Activated naive CD4-positive, alpha-beta T cell treated with anti-CD3 and anti-CD28 coated beads for 36 hours (primary cell): ENCODE measurements at regions of chr6 and their contacts with region 1.

Region 1: DNA sequence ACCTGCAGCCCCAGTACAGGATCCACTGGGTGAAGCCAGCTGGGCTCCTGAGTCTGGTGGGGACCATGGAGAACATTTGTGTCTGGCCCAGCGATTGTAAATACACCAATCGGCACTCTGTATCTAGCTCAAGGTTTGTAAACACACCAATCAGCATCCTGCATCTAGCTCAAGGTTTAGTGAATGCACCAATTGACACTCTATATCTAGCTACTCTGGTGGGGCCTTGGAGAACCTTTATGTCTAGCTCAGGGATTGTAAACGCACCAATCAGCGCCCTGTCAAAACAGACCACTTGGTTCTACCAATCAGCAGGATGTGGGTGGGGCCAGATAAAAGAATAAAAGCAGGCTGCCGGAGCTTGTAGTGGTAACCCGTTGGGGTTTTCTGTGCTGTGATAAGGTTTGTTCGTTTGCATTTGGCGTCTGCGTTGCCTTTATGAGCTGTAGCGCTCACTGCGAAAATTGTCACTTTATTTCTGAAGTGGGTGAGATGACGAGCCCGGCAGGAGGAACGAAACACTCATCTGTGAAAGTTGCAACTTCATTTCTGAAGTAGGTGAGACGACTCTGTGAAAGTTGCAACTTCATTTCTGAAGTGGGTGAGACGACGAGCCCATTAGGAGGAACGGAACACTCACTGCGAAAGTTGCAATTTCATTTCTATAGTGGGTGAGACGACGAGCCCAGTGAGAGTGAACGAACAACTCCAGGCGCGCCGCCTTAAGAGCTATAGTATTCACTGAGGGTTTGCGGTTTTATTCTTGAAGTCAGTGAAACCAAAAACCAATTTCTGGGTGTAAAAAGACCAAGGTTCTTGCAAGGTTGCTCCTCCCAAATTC is 31.1 kb downstream of the SERPINB6 start:
- DNase-seq: peak; percentile 95
- H3K4me3 Mint-ChIP-seq: peak overlapping the region; percentile 2
- H3K27ac Mint-ChIP-seq: peak overlapping the region; percentile 97
- H3K4me1 Mint-ChIP-seq: peaks cover 69% of the 10 kb centered on the region
- H3K27me3 Mint-ChIP-seq: no peaks in the 10 kb centered on the region

Region 2: GRCh38 chr6:1498491-1499113 is 1441.6 kb before region 1 on chr6:
- CTCF ChIA-PET with region 1: no interaction called
- intact Hi-C with region 1: no loop called
- DNase-seq: no peak
- H3K4me3 Mint-ChIP-seq: no peak overlapping the region
- H3K27ac Mint-ChIP-seq: no peak overlapping the region
- H3K4me1 Mint-ChIP-seq: no peaks in the 10 kb centered on the region
- H3K27me3 Mint-ChIP-seq: peaks cover 6% of the 10 kb centered on the region

Region 3: GRCh38 chr6:1596088-1596852 is 1344.0 kb before region 1 on chr6:
- CTCF ChIA-PET with region 1: no interaction called
- intact Hi-C with region 1: no loop called
- DNase-seq: peak; percentile 70
- H3K4me3 Mint-ChIP-seq: no peak overlapping the region
- H3K27ac Mint-ChIP-seq: no peak overlapping the region
- H3K4me1 Mint-ChIP-seq: peaks cover 5% of the 10 kb centered on the region
- H3K27me3 Mint-ChIP-seq: peaks cover 56% of the 10 kb centered on the region

Region 4: GRCh38 chr6:2127484-2127911 is 812.7 kb before region 1 on chr6:
- CTCF ChIA-PET with region 1: no interaction called
- intact Hi-C with region 1: no loop called
- DNase-seq: peak; percentile 67
- H3K4me3 Mint-ChIP-seq: no peak overlapping the region
- H3K27ac Mint-ChIP-seq: peak overlapping the region; percentile 12
- H3K4me1 Mint-ChIP-seq: peaks cover 31% of the 10 kb centered on the region
- H3K27me3 Mint-ChIP-seq: no peaks in the 10 kb centered on the region

Region 5: GRCh38 chr6:2684059-2684749 is 256.0 kb before region 1 on chr6:
- CTCF ChIA-PET with region 1: no interaction called
- intact Hi-C with region 1: no loop called
- DNase-seq: no peak
- H3K4me3 Mint-ChIP-seq: no peak overlapping the region
- H3K27ac Mint-ChIP-seq: no peak overlapping the region
- H3K4me1 Mint-ChIP-seq: no peaks in the 10 kb centered on the region
- H3K27me3 Mint-ChIP-seq: no peaks in the 10 kb centered on the region

Region 6: GRCh38 chr6:2818593-2818992 is 121.6 kb before region 1 on chr6:
- CTCF ChIA-PET with region 1: no interaction called
- intact Hi-C with region 1: loop called (anchors 1 kb)
- DNase-seq: peak; percentile 61
- H3K4me3 Mint-ChIP-seq: no peak overlapping the region
- H3K27ac Mint-ChIP-seq: peak overlapping the region; percentile 17
- H3K4me1 Mint-ChIP-seq: peaks cover 40% of the 10 kb centered on the region
- H3K27me3 Mint-ChIP-seq: no peaks in the 10 kb centered on the region

Region 7: GRCh38 chr6:2853761-2854395 is 86.4 kb before region 1 on chr6:
- CTCF ChIA-PET with region 1: interaction called, 177 read pairs
- intact Hi-C with region 1: loop called (anchors 1 kb)
- DNase-seq: peak; percentile 96
- H3K4me3 Mint-ChIP-seq: peak overlapping the region; percentile 59
- H3K27ac Mint-ChIP-seq: peak overlapping the region; percentile 100
- H3K4me1 Mint-ChIP-seq: peaks cover 64% of the 10 kb centered on the region
- H3K27me3 Mint-ChIP-seq: no peaks in the 10 kb centered on the region

Region 8: DNA sequence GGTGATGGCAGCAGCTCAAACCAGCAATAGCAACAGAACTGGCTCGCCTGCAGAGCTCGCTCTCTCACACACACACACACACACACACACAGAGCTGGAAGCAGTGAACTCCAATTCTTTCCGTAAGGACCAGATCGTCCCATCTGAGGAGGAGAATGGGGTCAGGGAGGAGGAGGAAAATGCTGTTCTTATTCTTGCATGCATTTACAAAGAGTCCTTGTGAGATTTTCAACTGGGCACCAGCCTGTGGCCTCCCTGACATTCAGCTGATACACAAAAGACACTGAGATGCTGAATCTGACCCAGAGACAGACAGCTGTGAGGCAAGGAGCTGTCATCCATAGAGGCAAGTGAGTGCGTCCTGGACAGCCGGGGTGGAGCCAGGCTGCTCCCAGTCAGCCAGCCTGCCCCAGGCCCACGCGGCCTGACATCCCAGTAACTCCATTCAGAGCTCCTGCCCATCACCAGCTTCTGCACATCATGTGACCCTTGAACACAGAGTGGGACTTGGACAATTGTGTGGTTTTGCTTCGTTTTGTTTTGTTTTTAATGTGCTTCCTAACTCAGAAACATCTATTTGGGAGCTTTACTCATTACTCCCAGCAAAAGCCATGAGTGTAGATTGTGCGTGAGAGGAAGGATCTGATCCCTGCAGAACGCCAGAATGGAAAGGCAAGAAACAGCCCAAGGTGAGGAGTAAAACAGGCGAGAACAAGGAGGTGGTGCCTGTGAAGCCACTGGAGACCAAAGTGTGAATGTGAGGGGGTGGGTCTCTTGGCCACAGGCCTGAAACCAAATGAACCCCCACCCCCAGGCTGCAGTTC is 39.2 kb before region 1 on chr6:
- CTCF ChIA-PET with region 1: interaction called, 5 read pairs
- intact Hi-C with region 1: loop called (anchors 1 kb)
- DNase-seq: no peak
- H3K4me3 Mint-ChIP-seq: peak overlapping the region; percentile 99
- H3K27ac Mint-ChIP-seq: peak overlapping the region; percentile 96
- H3K4me1 Mint-ChIP-seq: peaks cover 52% of the 10 kb centered on the region
- H3K27me3 Mint-ChIP-seq: no peaks in the 10 kb centered on the region

Region 9: DNA sequence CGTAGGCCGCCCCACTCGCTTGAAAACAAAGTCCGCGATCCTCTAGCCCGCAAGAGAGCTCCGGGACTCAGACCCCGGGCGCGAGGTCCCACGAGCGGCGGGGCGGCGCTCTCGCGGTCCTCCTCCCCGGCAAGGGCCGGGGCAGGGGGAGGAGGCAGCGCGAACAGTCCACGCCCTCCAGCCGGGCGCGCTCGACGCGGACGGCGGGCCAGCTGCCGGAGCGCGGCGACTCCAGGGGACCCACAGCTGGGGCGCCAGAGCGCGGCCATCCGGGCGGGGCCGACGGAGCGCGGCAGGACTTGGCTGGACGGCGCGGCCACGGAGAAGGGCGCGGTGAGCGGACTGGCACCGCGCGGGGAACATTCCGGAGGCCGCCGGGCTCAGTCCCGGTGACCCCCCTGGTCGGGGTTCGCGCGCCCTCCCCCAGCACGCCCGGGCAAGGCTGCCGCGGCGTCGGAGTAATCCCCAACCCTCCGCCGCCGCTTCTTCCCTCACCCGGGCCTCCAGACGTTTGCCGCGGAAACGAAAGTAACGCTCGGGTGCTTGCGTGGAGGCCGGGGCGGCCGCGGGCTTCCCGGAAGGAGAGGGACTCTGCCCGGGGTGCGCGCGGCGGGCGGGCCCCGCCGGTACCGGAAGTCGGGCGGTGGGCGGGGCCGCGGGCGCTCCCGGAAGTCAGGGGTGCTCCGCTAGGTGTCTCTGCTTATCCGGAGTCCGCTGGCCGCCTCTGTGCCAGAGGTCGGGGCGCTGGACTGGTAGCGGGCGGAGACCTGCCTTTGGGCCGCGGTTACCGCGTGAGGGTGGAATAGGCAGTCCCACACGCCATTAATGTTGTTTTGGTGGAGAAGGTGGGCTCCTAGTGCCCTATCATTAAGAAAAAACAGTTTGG is 128.3 kb after region 1 on chr6 and contains the start of gene RIPK1:
- CTCF ChIA-PET with region 1: no interaction called
- intact Hi-C with region 1: loop called (anchors 1 kb)
- DNase-seq: peak; percentile 95
- H3K4me3 Mint-ChIP-seq: peak within 1 kb of the TSS; percentile 92
- H3K27ac Mint-ChIP-seq: peak within 1 kb of the TSS; percentile 97
- H3K4me1 Mint-ChIP-seq: peaks cover 49% of the 10 kb centered on the region
- H3K27me3 Mint-ChIP-seq: no peaks in the 10 kb centered on the region
- total RNA-seq, gene RIPK1: 8.8 to 10.1 TPM